Natural killer cell (primary cell): ENCODE measurements at regions of chr10 and their contacts with region 1.

Region 1: GRCh38 chr10:73495884-73496674 is at the start of gene PPP3CB:
- DNase-seq: peak; percentile 70 to 97
- ATAC-seq: peak; percentile 81 to 92 (median 81)
- H3K4me3 ChIP-seq: peak within 1 kb of the TSS; percentile 71
- H3K4me3 Mint-ChIP-seq: peak within 1 kb of the TSS; percentile 96
- H3K27ac ChIP-seq: peak within 1 kb of the TSS; percentile 77
- H3K27ac Mint-ChIP-seq: peak within 1 kb of the TSS; percentile 91 to 93
- H3K4me1 ChIP-seq: peaks cover 23% of the 10 kb centered on the region
- H3K4me1 Mint-ChIP-seq: peaks cover 42 to 52% of the 10 kb centered on the region in 2 donors
- H3K27me3 ChIP-seq: no peaks in the 10 kb centered on the region
- H3K27me3 Mint-ChIP-seq: no peaks in the 10 kb centered on the region
- CTCF ChIP-seq: no peak
- total RNA-seq, gene PPP3CB: 38.7 to 49.9 (median 41.2) TPM

Region 2: DNA sequence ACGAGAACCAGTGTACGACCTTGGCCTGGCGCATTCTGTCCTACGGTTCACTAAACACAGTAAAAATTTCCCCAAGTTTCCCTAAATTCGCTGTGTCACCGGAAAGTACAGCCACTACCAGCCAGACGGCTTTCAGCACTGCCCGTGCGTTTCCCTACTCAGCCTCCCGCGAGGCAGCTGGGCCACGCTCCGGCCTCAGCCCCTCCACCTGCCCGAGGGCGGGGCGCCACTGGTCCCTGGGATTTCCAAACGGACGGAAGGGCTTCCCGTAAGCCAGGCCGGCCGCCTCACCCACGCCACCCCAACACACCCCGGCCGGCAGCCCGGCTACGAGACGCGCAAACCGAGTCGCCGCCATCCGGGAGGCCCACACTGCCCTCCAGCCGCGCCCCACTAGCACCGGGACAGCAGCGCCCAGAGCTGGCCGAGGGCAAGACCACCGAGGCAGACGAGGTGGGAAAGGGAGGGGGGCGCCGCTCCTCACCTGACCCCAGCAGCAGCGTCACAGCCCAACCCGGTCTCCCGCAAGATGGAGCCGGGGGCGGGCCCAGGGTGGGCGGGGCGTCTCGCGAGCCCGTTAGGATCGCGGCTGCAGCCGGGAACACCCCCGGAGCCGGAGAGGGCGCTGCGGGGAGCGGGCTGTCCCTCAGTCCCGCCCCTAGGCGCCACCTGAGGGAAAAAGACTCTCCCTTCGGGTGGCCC is 82.4 kb before region 1 on chr10 and contains the start of gene ANXA7:
- intact Hi-C with region 1: loop called (anchors 2 kb)
- DNase-seq: peak; percentile 86 to 94
- ATAC-seq: peak; percentile 92 to 98 (median 94)
- H3K4me3 ChIP-seq: peak within 1 kb of the TSS; percentile 78
- H3K4me3 Mint-ChIP-seq: peak within 1 kb of the TSS; percentile 95
- H3K27ac ChIP-seq: peak within 1 kb of the TSS; percentile 86
- H3K27ac Mint-ChIP-seq: peak within 1 kb of the TSS; percentile 91 to 92
- H3K4me1 ChIP-seq: peaks cover 8% of the 10 kb centered on the region
- H3K4me1 Mint-ChIP-seq: peaks cover 32 to 36% of the 10 kb centered on the region in 2 donors
- H3K27me3 ChIP-seq: no peaks in the 10 kb centered on the region
- H3K27me3 Mint-ChIP-seq: peaks cover 0 to 2% of the 10 kb centered on the region in 2 donors
- CTCF ChIP-seq: no peak
- total RNA-seq, gene ANXA7: 61.0 to 82.0 (median 72.5) TPM

Region 3: DNA sequence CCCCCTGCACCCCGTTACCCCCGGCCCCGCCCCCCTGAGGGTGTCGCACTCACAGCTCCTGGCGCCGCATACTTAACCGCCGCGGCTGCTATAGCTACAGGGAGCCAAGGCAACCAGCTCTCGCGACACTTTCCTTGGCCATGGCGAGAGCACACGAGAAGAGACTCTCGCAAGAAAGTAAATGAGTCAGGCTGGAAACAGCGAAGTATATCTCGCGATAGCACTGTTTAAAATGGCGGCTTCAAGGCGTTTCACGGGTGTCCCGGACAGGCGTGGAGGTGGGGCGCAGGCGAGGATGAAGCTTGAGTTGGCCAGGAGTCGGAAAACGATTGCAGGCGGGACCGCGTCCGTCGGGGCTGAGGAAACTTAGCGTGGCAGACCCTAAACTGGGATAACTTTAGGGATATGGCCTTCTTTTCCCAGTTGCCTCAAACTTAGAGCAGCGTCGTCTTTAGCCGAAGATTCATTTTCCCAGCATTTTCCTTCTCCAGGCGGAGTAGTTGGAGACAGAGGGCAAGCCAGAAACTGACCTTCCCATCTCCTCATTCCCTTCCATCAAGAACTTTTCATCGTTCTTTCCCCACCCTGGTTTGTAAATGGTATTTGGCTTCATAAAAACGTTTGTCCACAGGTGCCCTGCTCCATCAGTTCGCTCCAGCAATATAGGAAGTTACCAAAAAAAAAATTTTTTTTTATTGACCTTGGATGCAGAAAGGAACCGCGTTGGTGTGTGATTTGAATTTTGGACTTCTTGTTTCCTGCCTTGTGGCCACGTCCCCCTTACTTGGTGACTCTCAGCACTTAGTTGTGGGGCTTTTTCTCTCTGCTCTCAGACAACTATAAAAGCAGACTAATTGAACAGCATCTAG is 130.0 kb after region 1 on chr10:
- intact Hi-C with region 1: loop called (anchors 2 kb)
- DNase-seq: peak; percentile 89 to 98
- ATAC-seq: peak; percentile 95 to 98 (median 96)
- H3K4me3 ChIP-seq: peak overlapping the region; percentile 51
- H3K4me3 Mint-ChIP-seq: peak overlapping the region; percentile 98
- H3K27ac ChIP-seq: peak overlapping the region; percentile 32
- H3K27ac Mint-ChIP-seq: peak overlapping the region; percentile 93 to 99
- H3K4me1 ChIP-seq: peaks cover 7% of the 10 kb centered on the region
- H3K4me1 Mint-ChIP-seq: peaks cover 9 to 22% of the 10 kb centered on the region in 2 donors
- H3K27me3 ChIP-seq: no peaks in the 10 kb centered on the region
- H3K27me3 Mint-ChIP-seq: no peaks in the 10 kb centered on the region
- CTCF ChIP-seq: no peak

Region 4: DNA sequence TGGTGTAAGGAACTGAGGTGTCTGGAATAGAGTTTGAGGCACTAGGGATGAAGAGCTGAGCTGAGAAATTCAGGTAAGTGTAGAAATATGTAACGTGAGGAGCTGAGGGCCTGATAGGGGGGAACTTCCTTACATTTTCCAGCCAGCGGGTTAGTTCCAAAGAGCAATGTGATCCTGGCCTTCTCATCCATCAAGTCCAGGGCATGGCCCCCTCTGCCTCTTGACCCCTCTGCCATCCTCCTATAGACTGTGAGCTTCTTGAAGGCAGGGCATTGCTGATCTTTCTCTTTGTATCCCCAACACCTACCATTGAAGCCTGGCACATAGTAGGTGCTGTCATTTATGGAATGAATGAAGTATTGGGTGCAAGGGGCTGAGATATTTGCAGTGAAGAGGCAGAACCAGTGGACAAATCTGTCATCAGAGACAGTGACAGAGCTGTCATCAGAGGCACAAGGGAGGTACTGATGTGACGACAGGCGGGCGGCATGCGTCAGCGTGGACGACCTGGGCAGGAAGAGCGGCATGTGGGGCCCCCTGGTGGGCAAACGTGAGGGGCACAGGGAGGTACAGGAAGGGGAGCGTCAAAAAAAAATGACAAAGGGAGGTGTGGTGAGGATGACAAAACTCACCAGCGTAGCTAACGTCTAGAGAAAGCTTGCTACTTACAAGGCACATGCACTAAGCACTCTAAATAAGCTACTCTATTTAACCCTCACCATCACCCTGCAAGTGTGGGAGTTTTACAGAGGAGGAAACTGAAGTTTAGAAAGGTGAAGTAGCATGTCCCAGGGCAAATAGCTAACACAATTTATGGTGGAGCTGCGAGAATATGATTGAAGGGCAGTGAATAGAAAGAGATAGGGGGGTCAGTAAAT is 383.5 kb after region 1 on chr10:
- intact Hi-C with region 1: loop called (anchors 10 kb)
- DNase-seq: peak; percentile 93 to 99
- ATAC-seq: peak; percentile 88 to 97 (median 90)
- H3K4me3 ChIP-seq: no peak overlapping the region
- H3K4me3 Mint-ChIP-seq: peak overlapping the region; percentile 40
- H3K27ac ChIP-seq: peak overlapping the region; percentile 2
- H3K27ac Mint-ChIP-seq: peak overlapping the region; percentile 44 to 78
- H3K4me1 ChIP-seq: peaks cover 33% of the 10 kb centered on the region
- H3K4me1 Mint-ChIP-seq: peaks cover 21 to 36% of the 10 kb centered on the region in 2 donors
- H3K27me3 ChIP-seq: no peaks in the 10 kb centered on the region
- H3K27me3 Mint-ChIP-seq: peaks cover 7% of the 10 kb centered on the region in 2 donors
- CTCF ChIP-seq: peak; percentile 89